ENCODE measurements at regions of chr1 and their contacts with region 1.

Region 1: DNA sequence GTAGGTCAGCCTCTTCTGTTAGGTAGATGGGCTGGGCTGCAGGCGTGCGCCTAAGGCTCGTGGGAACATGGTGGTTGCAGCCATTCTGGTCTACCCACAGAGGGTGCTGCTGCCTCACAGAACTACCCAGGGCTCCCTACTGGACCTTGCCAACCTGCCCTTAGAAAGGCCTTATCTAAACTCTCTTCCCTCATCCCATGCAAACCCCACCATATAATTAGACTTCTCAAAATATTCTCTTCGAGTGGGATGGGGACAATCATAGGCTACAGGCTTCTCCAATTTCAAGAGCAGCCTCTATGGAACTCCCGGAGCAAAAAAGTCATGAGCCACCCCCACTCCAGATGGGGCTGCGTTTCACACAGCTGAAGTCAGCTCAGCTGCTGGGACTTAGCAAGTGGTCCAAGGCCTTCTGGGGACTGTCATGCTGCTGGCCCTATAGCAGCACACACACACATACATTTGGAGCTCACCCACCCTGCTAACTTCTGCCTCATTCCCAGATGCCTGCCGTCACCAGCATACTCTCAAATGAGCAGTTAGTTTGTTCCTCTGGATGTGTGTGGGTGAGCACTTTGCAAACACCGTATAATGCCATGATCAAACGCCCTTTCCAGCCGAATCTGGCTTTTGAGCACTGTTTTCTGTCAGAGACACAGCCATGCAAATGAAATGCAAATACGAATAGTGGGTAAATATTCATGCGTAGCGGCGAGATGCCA is 6.1 kb upstream of the SDHB start:
- DNase-seq: peak; percentile 66 to 75
- H3K4me3 ChIP-seq: no peak overlapping the region
- H3K27ac ChIP-seq: no peak overlapping the region
- H3K4me1 ChIP-seq: no peaks in the 10 kb centered on the region
- H3K27me3 ChIP-seq: no peaks in the 10 kb centered on the region
- CTCF ChIP-seq: peak; percentile 75

Region 2: GRCh38 chr1:17181781-17182464 is 122.0 kb after region 1 on chr1:
- CTCF ChIA-PET with region 1: no interaction called
- POLR2A ChIA-PET with region 1: no interaction called
- intact Hi-C with region 1: no loop called
- DNase-seq: no peak
- H3K4me3 ChIP-seq: no peak overlapping the region
- H3K27ac ChIP-seq: no peak overlapping the region
- H3K4me1 ChIP-seq: peaks cover 4% of the 10 kb centered on the region; the same call in 1 of the 2 replicates
- H3K27me3 ChIP-seq: no peaks in the 10 kb centered on the region
- CTCF ChIP-seq: no peak

Region 3: GRCh38 chr1:17405898-17406759 is 346.2 kb after region 1 on chr1:
- CTCF ChIA-PET with region 1: interaction called, 4 read pairs
- POLR2A ChIA-PET with region 1: no interaction called
- intact Hi-C with region 1: loop called (anchors 1 kb)
- DNase-seq: peak; percentile 39 to 73
- H3K4me3 ChIP-seq: no peak overlapping the region
- H3K27ac ChIP-seq: no peak overlapping the region
- H3K4me1 ChIP-seq: peaks cover 11% of the 10 kb centered on the region
- H3K27me3 ChIP-seq: no peaks in the 10 kb centered on the region
- CTCF ChIP-seq: peak; percentile 78

Region 4: DNA sequence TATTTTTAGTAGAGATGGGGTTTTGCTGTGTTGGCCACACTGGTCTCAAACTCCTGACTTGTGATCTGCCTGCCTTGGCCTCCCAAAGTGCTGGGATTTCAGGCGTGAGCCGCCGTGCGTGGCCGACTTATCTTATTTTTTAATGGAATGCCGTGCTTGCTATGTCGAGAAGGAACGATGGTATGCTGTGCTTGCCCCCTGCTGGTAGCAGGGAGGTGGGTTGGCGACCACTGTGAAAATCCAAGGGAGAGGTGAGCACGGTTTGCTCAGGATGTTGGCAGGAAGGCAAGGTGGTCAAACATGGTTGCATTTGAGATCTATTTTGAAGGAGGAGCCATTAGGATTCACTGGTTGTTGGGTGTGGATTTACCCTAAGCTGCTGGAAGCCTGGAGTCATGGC is 425.4 kb after region 1 on chr1:
- CTCF ChIA-PET with region 1: no interaction called
- POLR2A ChIA-PET with region 1: no interaction called
- intact Hi-C with region 1: loop called (anchors 1 kb)
- DNase-seq: no peak
- H3K4me3 ChIP-seq: no peak overlapping the region
- H3K27ac ChIP-seq: no peak overlapping the region
- H3K4me1 ChIP-seq: no peaks in the 10 kb centered on the region
- H3K27me3 ChIP-seq: no peaks in the 10 kb centered on the region
- CTCF ChIP-seq: peak; percentile 35; the same call in 1 of the 2 replicates

Measured in PC-9 (cell line).